ENCODE measurements at regions of chr12 and their contacts with region 1.

Region 1: GRCh38 chr12:76037130-76038103 is 5.8 kb upstream of the PHLDA1 start:
- DNase-seq: peak; percentile 60 to 66 (median 64)
- H3K4me3 ChIP-seq: no peak overlapping the region
- H3K4me3 Mint-ChIP-seq: no peak overlapping the region
- H3K27ac ChIP-seq: no peak overlapping the region
- H3K27ac Mint-ChIP-seq: peak overlapping the region in 5 of 7 donors; percentile 0 to 68 (median 6)
- H3K4me1 ChIP-seq: peaks cover 5% of the 10 kb centered on the region
- H3K4me1 Mint-ChIP-seq: peaks cover 10 to 17% (median 13%) of the 10 kb centered on the region in 4 donors
- H3K27me3 ChIP-seq: no peaks in the 10 kb centered on the region
- H3K27me3 Mint-ChIP-seq: no peaks in the 10 kb centered on the region

Region 2: DNA sequence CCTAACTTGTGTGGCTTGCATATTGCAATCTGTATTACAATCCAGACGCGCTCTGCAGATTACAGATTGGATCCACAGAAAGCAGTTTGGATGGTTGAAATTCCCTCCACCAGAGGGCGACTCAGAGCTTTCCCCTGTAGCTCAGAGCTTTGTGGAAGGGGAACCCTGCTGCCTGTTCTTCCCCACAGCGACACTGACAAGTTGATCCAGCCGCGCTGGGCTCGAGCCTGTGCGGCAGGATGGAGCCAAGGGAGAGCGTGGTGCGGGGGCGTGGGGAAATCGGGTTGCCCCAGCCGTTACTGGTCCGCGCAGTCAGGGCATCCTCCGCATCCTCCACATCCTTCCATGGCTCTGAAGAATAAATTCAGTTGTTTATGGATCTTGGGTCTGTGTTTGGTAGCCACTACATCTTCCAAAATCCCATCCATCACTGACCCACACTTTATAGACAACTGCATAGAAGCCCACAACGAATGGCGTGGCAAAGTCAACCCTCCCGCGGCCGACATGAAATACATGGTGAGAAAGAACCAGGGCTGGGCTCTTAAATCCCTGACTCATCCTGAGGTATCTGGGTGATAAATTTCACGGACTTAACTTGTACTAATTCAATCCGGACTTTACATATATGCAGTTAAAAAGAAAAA is 702.9 kb before region 1 on chr12 and contains the start of gene GLIPR1L1:
- CTCF ChIA-PET with region 1: no interaction called
- POLR2A ChIA-PET with region 1: no interaction called
- intact Hi-C with region 1: loop called (anchors 2 kb)
- DNase-seq: peak; percentile 76 to 82 (median 77)
- H3K4me3 ChIP-seq: peak within 1 kb of the TSS in 1 of 2 donors; percentile 54
- H3K4me3 Mint-ChIP-seq: peak within 1 kb of the TSS; percentile 70 to 86 (median 80)
- H3K27ac ChIP-seq: no peak within 1 kb of the TSS
- H3K27ac Mint-ChIP-seq: peak within 1 kb of the TSS in 1 of 7 donors; percentile 54
- H3K4me1 ChIP-seq: peaks cover 21% of the 10 kb centered on the region
- H3K4me1 Mint-ChIP-seq: peaks cover 13 to 21% (median 17%) of the 10 kb centered on the region in 4 donors
- H3K27me3 ChIP-seq: peaks cover 6% of the 10 kb centered on the region
- H3K27me3 Mint-ChIP-seq: peaks cover 6 to 12% of the 10 kb centered on the region in 2 donors
- total RNA-seq, gene GLIPR1L1: not detected

Region 3: GRCh38 chr12:75526655-75527511 is 510.5 kb before region 1 on chr12:
- CTCF ChIA-PET with region 1: interaction called, 173 read pairs
- POLR2A ChIA-PET with region 1: interaction called, 6 read pairs
- intact Hi-C with region 1: loop called (anchors 1 kb)
- DNase-seq: peak in 4 of 5 donors; percentile 32 to 42 (median 40)
- H3K4me3 ChIP-seq: no peak overlapping the region
- H3K4me3 Mint-ChIP-seq: no peak overlapping the region
- H3K27ac ChIP-seq: no peak overlapping the region
- H3K27ac Mint-ChIP-seq: no peak overlapping the region
- H3K4me1 ChIP-seq: no peaks in the 10 kb centered on the region
- H3K4me1 Mint-ChIP-seq: peaks cover 0 to 2% (median 0%) of the 10 kb centered on the region in 4 donors
- H3K27me3 ChIP-seq: no peaks in the 10 kb centered on the region
- H3K27me3 Mint-ChIP-seq: peaks cover 5 to 22% of the 10 kb centered on the region in 2 donors

Region 4: DNA sequence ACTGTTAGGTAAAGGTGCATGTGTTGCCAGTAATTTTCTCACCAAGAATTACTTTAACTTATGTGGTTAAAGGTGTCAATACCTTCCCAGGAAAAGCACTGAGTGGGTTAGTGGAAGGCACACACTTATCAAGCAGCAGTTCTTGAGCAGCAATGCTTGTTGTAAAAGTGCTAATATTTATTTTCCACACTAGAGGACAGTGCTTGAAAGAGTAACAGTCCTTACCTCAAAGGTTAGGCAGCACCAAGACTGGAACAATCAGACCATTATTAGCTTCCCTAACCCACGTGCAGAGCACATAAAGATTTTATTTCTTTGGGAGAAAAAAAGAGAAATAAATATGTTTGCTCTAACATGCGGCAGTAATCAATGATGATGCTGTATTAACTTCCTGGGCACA is 477.2 kb before region 1 on chr12:
- CTCF ChIA-PET with region 1: interaction called, 7 read pairs
- POLR2A ChIA-PET with region 1: no interaction called
- intact Hi-C with region 1: loop called (anchors 1 kb)
- DNase-seq: no peak
- H3K4me3 ChIP-seq: no peak overlapping the region
- H3K4me3 Mint-ChIP-seq: no peak overlapping the region
- H3K27ac ChIP-seq: no peak overlapping the region
- H3K27ac Mint-ChIP-seq: no peak overlapping the region
- H3K4me1 ChIP-seq: no peaks in the 10 kb centered on the region
- H3K4me1 Mint-ChIP-seq: no peaks in the 10 kb centered on the region
- H3K27me3 ChIP-seq: no peaks in the 10 kb centered on the region
- H3K27me3 Mint-ChIP-seq: peaks cover 8 to 12% of the 10 kb centered on the region in 2 donors

Region 5: DNA sequence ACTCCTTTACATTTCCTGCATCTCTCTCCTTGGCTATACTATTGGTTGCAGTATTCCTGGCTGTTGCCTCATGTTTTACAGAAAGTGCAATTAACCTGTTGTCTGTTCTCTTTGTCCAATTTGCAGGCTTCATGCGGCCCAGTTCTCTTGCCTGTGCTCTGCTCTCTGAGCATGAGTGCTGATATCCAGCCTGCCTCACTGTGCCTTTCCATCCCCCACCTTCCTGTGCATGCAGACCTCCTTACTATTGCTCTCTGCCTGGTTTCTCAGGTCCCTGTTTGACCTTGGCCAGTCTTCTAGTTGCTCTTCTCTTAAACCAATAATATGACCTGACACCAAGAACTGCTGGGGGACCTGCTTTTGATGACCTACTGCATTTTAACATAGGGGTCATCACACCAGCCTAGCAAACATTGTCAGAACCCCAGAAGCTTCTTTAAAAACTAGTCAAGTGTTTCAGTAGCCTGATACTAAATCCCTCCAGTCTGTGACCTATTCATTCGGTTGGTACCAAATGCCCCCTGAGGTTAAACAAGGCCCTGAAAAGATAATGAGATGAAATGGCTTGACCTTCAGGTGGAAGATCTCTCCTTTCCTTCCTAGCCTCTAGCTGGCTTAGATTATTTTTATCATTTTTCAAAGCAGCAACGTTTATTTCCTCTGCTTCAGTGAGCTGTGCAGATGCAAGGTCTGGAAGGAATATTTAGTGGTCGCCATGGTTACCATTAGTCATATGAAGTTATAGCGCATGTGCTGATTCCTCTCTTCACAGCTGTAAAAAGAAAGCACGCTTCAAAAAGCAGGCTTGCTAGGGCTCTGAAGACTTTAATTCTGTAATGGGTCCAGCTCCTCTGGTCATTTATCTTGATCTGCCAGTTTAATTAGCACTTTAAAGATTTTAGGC is 222.3 kb before region 1 on chr12:
- CTCF ChIA-PET with region 1: interaction called, 21 read pairs
- POLR2A ChIA-PET with region 1: interaction called, 29 read pairs
- intact Hi-C with region 1: loop called (anchors 1 kb)
- DNase-seq: peak; percentile 39 to 66 (median 59)
- H3K4me3 ChIP-seq: no peak overlapping the region
- H3K4me3 Mint-ChIP-seq: peak overlapping the region in 1 of 8 donors; percentile 36
- H3K27ac ChIP-seq: peak overlapping the region; percentile 39
- H3K27ac Mint-ChIP-seq: peak overlapping the region; percentile 64 to 93 (median 87)
- H3K4me1 ChIP-seq: peaks cover 23% of the 10 kb centered on the region
- H3K4me1 Mint-ChIP-seq: peaks cover 10 to 26% (median 18%) of the 10 kb centered on the region in 4 donors
- H3K27me3 ChIP-seq: no peaks in the 10 kb centered on the region
- H3K27me3 Mint-ChIP-seq: no peaks in the 10 kb centered on the region

Region 6: GRCh38 chr12:75862692-75863471 is 174.5 kb before region 1 on chr12:
- CTCF ChIA-PET with region 1: no interaction called
- POLR2A ChIA-PET with region 1: no interaction called
- intact Hi-C with region 1: no loop called
- DNase-seq: no peak
- H3K4me3 ChIP-seq: no peak overlapping the region
- H3K4me3 Mint-ChIP-seq: no peak overlapping the region
- H3K27ac ChIP-seq: no peak overlapping the region
- H3K27ac Mint-ChIP-seq: no peak overlapping the region
- H3K4me1 ChIP-seq: no peaks in the 10 kb centered on the region
- H3K4me1 Mint-ChIP-seq: peaks cover 0 to 1% (median 0%) of the 10 kb centered on the region in 4 donors
- H3K27me3 ChIP-seq: no peaks in the 10 kb centered on the region
- H3K27me3 Mint-ChIP-seq: peaks cover 0 to 1% of the 10 kb centered on the region in 2 donors

Region 7: DNA sequence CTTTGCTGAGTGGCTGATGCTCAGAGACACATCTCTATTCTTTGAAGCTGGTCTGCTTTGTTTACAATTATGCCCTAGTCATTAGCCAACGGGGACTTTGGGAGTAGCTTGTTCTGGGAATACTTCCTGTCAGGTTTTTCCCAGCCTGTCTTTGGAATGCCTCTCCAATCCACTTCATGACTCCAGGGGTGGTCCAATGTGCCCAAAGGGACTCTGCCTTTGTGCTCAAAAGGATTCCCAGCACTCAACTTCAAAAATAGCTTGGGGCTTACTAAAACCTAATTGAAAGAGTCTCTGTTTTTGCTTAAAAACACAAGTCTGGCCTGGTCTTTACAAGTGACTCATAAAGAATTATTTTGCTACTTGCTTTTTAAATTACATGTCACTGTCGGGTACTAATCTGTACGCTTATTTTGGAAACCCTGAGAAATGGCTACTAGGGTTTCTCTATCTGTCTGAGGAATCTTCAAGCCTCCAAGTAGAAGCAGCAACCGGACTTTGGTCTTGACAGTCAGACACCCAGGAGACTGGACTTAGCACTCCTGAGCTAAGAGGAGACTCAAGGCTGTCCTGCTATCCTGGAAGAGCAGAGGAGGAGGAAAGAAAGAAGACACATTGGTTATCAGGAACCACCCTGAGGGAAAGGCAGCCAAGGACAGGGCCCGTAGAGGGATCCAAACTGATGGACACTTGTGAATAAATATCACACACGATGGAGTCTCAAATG is 26.5 kb before region 1 on chr12:
- CTCF ChIA-PET with region 1: no interaction called
- POLR2A ChIA-PET with region 1: no interaction called
- intact Hi-C with region 1: no loop called
- DNase-seq: no peak
- H3K4me3 ChIP-seq: no peak overlapping the region
- H3K4me3 Mint-ChIP-seq: no peak overlapping the region
- H3K27ac ChIP-seq: no peak overlapping the region
- H3K27ac Mint-ChIP-seq: no peak overlapping the region
- H3K4me1 ChIP-seq: no peaks in the 10 kb centered on the region
- H3K4me1 Mint-ChIP-seq: no peaks in the 10 kb centered on the region
- H3K27me3 ChIP-seq: no peaks in the 10 kb centered on the region
- H3K27me3 Mint-ChIP-seq: no peaks in the 10 kb centered on the region

Region 8: GRCh38 chr12:76094754-76095153 is 57.3 kb after region 1 on chr12:
- CTCF ChIA-PET with region 1: no interaction called
- POLR2A ChIA-PET with region 1: no interaction called
- intact Hi-C with region 1: no loop called
- DNase-seq: no peak
- H3K4me3 ChIP-seq: no peak overlapping the region
- H3K4me3 Mint-ChIP-seq: no peak overlapping the region
- H3K27ac ChIP-seq: no peak overlapping the region
- H3K27ac Mint-ChIP-seq: no peak overlapping the region
- H3K4me1 ChIP-seq: no peaks in the 10 kb centered on the region
- H3K4me1 Mint-ChIP-seq: no peaks in the 10 kb centered on the region
- H3K27me3 ChIP-seq: no peaks in the 10 kb centered on the region
- H3K27me3 Mint-ChIP-seq: peaks cover 3 to 9% of the 10 kb centered on the region in 2 donors